AG04450 (cell line): ENCODE measurements at regions of chr6 and their contacts with region 1.

Region 1: DNA sequence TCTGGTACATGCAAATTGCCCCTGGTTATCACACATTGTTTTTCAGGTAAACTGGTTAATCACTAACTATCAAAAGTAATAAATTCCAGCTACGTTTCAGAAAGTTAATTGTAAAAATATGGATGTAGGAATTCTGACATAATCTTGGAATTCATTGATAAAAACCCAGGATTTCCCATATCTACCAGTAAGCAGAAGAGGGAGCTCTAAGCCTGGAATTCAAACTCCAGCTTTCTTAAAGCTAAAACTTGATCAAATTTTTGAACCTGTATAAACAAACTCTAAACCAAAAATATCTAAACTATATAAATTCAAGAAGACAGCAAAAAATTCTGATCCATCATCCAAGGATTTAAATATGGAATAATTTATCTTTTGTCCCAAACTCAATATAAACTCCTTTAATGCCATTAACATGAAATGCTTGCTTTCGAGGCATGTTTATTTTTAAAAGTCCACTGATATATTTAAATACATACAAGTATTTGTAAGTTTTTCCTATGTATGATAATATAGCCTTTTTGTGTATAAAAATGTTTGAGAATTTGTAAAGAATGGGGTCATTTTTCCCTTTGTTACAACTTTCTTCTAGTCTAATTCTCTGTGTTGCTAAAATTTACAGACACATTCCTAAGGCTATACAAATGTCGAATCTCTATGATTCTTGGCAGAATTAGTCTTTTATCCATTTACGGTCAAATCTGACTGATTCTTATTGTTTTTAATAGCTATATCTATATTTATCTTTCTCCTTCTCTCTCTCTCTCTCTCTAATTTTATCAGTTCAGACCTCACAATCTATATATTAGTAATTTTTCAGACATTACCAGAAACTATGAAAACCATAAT is 91.4 kb upstream of the RNF217 start:
- DNase-seq: peak; percentile 16
- H3K4me3 ChIP-seq: no peak overlapping the region
- H3K27ac ChIP-seq: no peak overlapping the region
- H3K27me3 ChIP-seq: no peaks in the 10 kb centered on the region
- CTCF ChIP-seq: peak; percentile 68

Region 2: DNA sequence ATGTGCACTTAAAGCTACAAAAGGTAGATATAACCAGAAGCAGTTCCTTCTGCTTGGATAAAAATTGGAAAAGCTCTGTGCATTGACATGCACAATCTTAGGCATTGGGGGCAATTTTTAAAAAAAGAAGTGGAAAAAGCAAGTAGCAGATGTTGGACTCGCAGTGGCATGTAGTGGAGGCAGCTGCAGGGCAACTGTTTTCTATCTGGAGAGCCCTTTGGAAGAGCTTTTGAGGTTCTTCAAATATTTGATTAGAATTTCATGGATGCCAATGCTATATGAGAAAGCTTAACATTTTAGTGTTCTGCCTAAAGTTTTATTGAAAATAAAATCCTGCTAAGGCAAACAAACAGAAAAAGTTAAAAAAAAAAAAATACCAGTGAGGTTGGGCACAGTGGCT is 296.9 kb before region 1 on chr6:
- CTCF ChIA-PET with region 1: no interaction called
- POLR2A ChIA-PET with region 1: no interaction called
- DNase-seq: no peak
- H3K4me3 ChIP-seq: no peak overlapping the region
- H3K27ac ChIP-seq: no peak overlapping the region
- H3K27me3 ChIP-seq: no peaks in the 10 kb centered on the region
- CTCF ChIP-seq: no peak

Region 3: GRCh38 chr6:124604719-124605118 is 266.1 kb before region 1 on chr6:
- CTCF ChIA-PET with region 1: no interaction called
- POLR2A ChIA-PET with region 1: no interaction called
- DNase-seq: no peak
- H3K4me3 ChIP-seq: no peak overlapping the region
- H3K27ac ChIP-seq: no peak overlapping the region
- H3K27me3 ChIP-seq: no peaks in the 10 kb centered on the region
- CTCF ChIP-seq: no peak

Region 4: GRCh38 chr6:124903791-124904190 is 33.0 kb after region 1 on chr6:
- CTCF ChIA-PET with region 1: no interaction called
- POLR2A ChIA-PET with region 1: no interaction called
- DNase-seq: no peak
- H3K4me3 ChIP-seq: no peak overlapping the region
- H3K27ac ChIP-seq: no peak overlapping the region
- H3K27me3 ChIP-seq: no peaks in the 10 kb centered on the region
- CTCF ChIP-seq: no peak

Region 5: DNA sequence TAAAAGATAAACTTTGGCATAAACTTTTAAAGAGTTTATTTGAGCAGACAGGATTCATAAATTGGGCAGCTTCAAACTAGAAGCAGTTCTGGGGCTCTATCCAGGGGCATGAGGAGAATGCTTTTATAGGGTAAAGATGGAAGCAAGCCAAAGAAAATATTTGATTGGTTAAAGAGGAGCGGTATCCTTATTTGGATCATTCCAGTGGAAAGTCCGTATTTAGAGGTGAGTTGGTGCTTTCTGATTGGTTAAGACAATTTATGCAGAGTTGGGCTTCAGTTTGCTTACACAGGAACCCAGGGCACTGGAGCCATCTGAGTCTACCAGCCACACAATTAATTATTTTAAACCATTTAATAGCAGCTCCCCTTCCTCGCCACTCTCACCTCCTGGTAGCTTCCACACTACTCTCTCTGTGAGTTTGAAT is 53.5 kb after region 1 on chr6:
- CTCF ChIA-PET with region 1: no interaction called
- POLR2A ChIA-PET with region 1: no interaction called
- DNase-seq: no peak
- H3K4me3 ChIP-seq: no peak overlapping the region
- H3K27ac ChIP-seq: no peak overlapping the region
- H3K27me3 ChIP-seq: no peaks in the 10 kb centered on the region
- CTCF ChIP-seq: no peak

Region 6: GRCh38 chr6:125123788-125124777 is 253.2 kb after region 1 on chr6:
- CTCF ChIA-PET with region 1: interaction called, 18 read pairs
- POLR2A ChIA-PET with region 1: no interaction called
- DNase-seq: no peak
- H3K4me3 ChIP-seq: no peak overlapping the region
- H3K27ac ChIP-seq: no peak overlapping the region
- H3K27me3 ChIP-seq: no peaks in the 10 kb centered on the region
- CTCF ChIP-seq: no peak

Region 7: GRCh38 chr6:125153391-125154117 is 282.7 kb after region 1 on chr6 and contains the start of gene TPD52L1:
- CTCF ChIA-PET with region 1: interaction called, 11 read pairs
- POLR2A ChIA-PET with region 1: no interaction called
- DNase-seq: no peak
- H3K4me3 ChIP-seq: peak within 1 kb of the TSS; percentile 70
- H3K27ac ChIP-seq: no peak within 1 kb of the TSS
- H3K27me3 ChIP-seq: peaks cover 3% of the 10 kb centered on the region
- CTCF ChIP-seq: peak; percentile 94
- polyA plus RNA-seq, gene TPD52L1: 10.9 and 11.1 TPM in 2 replicates